Posterior vena cava (tissue), 2 donors: ENCODE measurements at regions of chr4 and their contacts with region 1.

Region 1: GRCh38 chr4:52028969-52029368 is 8.8 kb upstream of the LRRC66 start:
- DNase-seq: no peak

Region 2: GRCh38 chr4:51895813-51896408 is 133.1 kb before region 1 on chr4:
- intact Hi-C with region 1: loop called (anchors 10 kb)
- DNase-seq: no peak

Region 3: GRCh38 chr4:51906167-51906958 is 122.6 kb before region 1 on chr4:
- intact Hi-C with region 1: loop called in 1 of 2 experiments (anchors 10 kb)
- DNase-seq: no peak